HepG2 (cell line): ENCODE measurements at regions of chr14 and their contacts with region 1.

Region 1: GRCh38 chr14:64434528-64434927 is 30.8 kb upstream of the AKAP5 start:
- DNase-seq: no peak
- ATAC-seq: no peak
- H3K4me3 ChIP-seq: no peak overlapping the region
- H3K27ac ChIP-seq: no peak overlapping the region
- H3K4me1 ChIP-seq: no peaks in the 10 kb centered on the region
- H3K27me3 ChIP-seq: no peaks in the 10 kb centered on the region
- CTCF ChIP-seq: no peak
- EP300 ChIP-seq: no peak
- POLR2A ChIP-seq: no peak
- RAD21 ChIP-seq: no peak

Region 2: DNA sequence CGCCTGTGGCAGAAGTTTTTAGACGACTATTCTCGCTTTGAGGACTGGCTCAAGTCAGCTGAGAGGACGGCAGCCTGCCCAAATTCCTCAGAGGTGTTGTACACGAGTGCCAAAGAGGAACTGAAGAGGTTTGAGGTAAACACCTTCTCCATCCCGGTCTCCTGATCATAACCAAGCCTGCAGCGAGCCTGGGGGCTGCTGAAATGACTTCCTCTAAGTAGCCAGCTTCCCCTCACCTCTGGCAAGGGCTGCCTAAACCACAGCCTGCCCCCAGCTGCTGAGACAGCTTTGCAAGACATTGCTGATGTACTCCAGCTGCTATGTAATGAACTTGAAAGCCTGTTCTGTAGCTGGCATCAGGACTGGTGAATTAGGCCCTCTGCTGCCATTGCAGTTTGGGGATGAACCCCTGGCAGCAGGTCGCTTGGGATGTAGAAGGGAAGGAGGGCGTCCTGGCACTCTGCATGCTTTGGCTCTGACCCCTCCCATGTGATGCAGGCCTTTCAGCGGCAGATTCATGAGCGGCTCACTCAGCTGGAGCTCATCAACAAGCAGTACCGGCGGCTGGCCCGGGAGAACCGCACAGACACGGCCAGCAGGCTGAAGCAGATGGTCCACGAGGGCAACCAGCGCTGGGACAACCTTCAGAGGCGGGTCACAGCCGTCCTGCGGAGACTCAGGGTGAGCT is 224.9 kb before region 1 on chr14:
- CTCF ChIA-PET with region 1: no interaction called
- POLR2A ChIA-PET with region 1: no interaction called
- in situ Hi-C with region 1: no loop called
- intact Hi-C with region 1: no loop called
- DNase-seq: no peak
- ATAC-seq: no peak
- H3K4me3 ChIP-seq: no peak overlapping the region
- H3K27ac ChIP-seq: no peak overlapping the region
- H3K4me1 ChIP-seq: no peaks in the 10 kb centered on the region
- H3K27me3 ChIP-seq: no peaks in the 10 kb centered on the region
- CTCF ChIP-seq: no peak
- EP300 ChIP-seq: no peak
- POLR2A ChIP-seq: no peak
- RAD21 ChIP-seq: no peak

Region 3: DNA sequence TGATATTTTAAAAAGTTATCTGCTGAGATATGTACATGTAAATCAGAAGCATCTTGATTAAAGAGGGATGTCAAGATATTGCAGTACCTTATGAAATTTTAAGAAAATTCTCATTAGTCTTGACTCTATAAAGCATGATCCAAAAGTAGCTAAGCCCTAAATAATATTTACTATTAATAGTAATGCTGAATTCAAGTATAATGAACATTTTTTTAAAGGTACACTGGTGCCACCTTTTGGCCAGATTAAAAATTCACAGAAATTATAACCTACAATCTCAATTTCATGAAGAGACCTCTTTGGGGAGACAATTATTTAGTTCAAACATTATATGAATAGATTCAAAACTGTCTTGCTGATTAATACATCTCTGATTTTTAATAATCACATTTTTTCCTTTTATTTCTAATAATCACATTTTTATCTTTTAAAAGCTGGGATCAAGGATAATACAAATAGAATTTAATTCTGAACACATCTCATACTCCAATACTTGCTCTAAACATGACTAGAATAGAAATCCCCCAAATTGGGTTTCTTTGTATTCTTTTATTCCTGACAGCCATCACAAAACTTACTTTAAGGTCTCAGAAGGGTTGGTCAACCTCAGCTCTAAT is 44.2 kb after region 1 on chr14:
- CTCF ChIA-PET with region 1: interaction called, 5 read pairs
- POLR2A ChIA-PET with region 1: no interaction called
- in situ Hi-C with region 1: no loop called
- intact Hi-C with region 1: loop called (anchors 1 kb)
- DNase-seq: no peak
- ATAC-seq: no peak
- H3K4me3 ChIP-seq: no peak overlapping the region
- H3K27ac ChIP-seq: no peak overlapping the region
- H3K4me1 ChIP-seq: peaks cover 8% of the 10 kb centered on the region
- H3K27me3 ChIP-seq: no peaks in the 10 kb centered on the region
- CTCF ChIP-seq: peak; percentile 21; the same call in 1 of the 2 replicates
- EP300 ChIP-seq: no peak
- POLR2A ChIP-seq: no peak
- RAD21 ChIP-seq: no peak

Region 4: DNA sequence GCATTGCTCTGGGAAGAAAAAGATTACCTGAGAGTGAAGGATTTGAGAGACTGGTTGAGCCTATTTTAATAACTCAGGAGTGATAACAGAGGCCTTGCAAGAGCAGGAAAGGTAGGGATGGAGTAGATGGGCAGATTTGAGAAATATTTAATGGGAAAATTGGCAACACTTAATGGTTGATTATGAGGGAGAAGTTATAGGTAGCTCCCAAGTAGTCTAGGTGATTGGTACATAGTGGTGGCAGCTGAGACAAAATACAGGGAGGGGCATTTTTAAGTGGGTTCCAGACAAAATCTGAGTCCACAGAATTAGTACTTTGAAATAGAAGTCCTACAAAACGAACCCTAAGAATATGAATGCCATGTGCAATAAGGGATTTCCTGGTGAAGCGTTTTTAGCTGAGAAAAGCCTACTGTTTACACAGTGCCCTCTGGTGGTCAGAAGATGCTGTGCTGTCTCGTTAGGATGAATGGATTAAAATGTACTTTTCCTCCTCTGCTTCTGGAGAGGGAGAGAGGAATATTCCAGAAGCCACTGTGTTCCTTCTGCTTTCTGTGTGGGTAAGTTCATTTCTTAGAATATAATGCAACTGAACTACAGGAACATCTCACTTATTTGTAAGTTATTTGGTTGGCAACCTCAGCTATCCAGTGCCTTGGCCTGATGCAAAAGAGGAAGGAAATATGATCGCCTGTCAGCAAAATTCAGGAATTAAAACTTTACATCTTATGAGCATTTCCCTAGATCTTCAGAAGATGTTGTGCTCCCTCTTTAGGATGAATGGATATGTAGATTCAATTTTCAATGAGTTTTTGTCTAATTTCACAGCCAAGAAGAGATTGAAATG is 76.5 kb after region 1 on chr14:
- CTCF ChIA-PET with region 1: interaction called, 10 read pairs
- POLR2A ChIA-PET with region 1: interaction called, 3 read pairs
- in situ Hi-C with region 1: no loop called
- intact Hi-C with region 1: loop called (anchors 1 kb)
- DNase-seq: peak; percentile 64
- ATAC-seq: peak; percentile 72
- H3K4me3 ChIP-seq: no peak overlapping the region
- H3K27ac ChIP-seq: no peak overlapping the region
- H3K4me1 ChIP-seq: peaks cover 55% of the 10 kb centered on the region
- H3K27me3 ChIP-seq: no peaks in the 10 kb centered on the region
- CTCF ChIP-seq: peak; percentile 83
- EP300 ChIP-seq: no peak
- POLR2A ChIP-seq: no peak
- RAD21 ChIP-seq: peak; percentile 60

Region 5: DNA sequence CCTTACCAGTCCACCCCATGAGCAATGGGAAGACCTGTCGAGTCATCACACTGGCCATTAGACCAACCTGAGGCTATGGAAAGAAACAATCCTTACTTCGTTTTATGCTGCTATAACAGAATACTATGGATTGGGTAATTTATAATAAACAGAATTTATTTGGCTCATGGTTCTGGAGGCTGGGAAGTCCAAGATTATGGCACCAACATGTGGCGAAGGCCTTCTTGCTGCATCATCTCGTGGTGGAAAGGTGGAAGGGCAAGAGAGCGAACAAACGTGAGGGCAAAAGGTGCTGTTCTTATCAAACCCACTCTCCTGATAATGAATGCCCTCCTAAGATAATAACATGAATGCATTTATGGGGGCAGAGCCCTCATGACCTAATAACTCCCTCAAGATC is 454.8 kb after region 1 on chr14:
- CTCF ChIA-PET with region 1: no interaction called
- POLR2A ChIA-PET with region 1: no interaction called
- in situ Hi-C with region 1: no loop called
- intact Hi-C with region 1: no loop called
- DNase-seq: no peak
- ATAC-seq: no peak
- H3K4me3 ChIP-seq: no peak overlapping the region
- H3K27ac ChIP-seq: no peak overlapping the region
- H3K4me1 ChIP-seq: no peaks in the 10 kb centered on the region
- H3K27me3 ChIP-seq: no peaks in the 10 kb centered on the region
- CTCF ChIP-seq: no peak
- EP300 ChIP-seq: no peak
- POLR2A ChIP-seq: no peak
- RAD21 ChIP-seq: no peak